ENCODE measurements at regions of chr13 and their contacts with region 1.

Region 1: GRCh38 chr13:42110410-42111155 is 62.1 kb downstream of the DGKH start:
- DNase-seq: no peak
- ATAC-seq: peak; percentile 67
- H3K4me3 Mint-ChIP-seq: no peak overlapping the region
- H3K27ac Mint-ChIP-seq: no peak overlapping the region
- H3K4me1 Mint-ChIP-seq: no peaks in the 10 kb centered on the region
- H3K27me3 Mint-ChIP-seq: peaks cover 5% of the 10 kb centered on the region
- CTCF ChIP-seq: peak; percentile 21

Region 2: DNA sequence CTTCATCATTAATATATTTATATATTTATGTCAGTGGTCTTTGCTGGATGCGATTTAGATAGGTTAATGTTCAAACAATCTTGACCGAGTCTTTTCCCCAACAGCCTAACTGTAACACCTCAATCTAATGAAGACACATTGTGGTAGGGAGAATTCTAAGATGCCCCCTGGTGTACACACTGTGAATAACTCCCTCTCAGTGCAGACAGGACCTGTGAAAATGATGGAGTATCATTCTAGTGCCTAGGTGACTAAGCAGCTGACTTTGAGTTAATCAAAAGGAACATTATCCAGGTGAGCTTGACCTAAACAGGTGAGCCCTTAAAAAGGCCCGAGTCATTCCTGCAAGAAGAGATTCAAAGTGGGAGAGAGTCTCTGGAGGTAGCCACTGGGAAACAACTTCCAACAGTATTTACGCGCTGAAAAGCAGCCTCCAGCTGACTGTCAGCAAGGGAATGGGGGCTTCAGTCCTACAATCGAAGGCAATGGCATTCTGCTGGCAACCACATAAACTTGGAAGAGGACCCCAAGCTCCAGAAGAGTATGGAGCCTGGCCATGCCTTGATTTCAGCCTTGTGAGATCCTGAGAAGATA is 888.2 kb before region 1 on chr13:
- CTCF ChIA-PET with region 1: no interaction called
- POLR2A ChIA-PET with region 1: no interaction called
- intact Hi-C with region 1: loop called (anchors 5 kb)
- DNase-seq: no peak
- ATAC-seq: peak; percentile 99
- H3K4me3 Mint-ChIP-seq: no peak overlapping the region
- H3K27ac Mint-ChIP-seq: no peak overlapping the region
- H3K4me1 Mint-ChIP-seq: peaks cover 3% of the 10 kb centered on the region
- H3K27me3 Mint-ChIP-seq: no peaks in the 10 kb centered on the region
- CTCF ChIP-seq: no peak

Region 3: GRCh38 chr13:41384755-41385503 is 725.7 kb before region 1 on chr13:
- CTCF ChIA-PET with region 1: no interaction called
- POLR2A ChIA-PET with region 1: no interaction called
- intact Hi-C with region 1: loop called (anchors 1 kb)
- DNase-seq: no peak
- ATAC-seq: no peak
- H3K4me3 Mint-ChIP-seq: no peak overlapping the region
- H3K27ac Mint-ChIP-seq: no peak overlapping the region
- H3K4me1 Mint-ChIP-seq: no peaks in the 10 kb centered on the region
- H3K27me3 Mint-ChIP-seq: peaks cover 8% of the 10 kb centered on the region
- CTCF ChIP-seq: no peak

Region 4: DNA sequence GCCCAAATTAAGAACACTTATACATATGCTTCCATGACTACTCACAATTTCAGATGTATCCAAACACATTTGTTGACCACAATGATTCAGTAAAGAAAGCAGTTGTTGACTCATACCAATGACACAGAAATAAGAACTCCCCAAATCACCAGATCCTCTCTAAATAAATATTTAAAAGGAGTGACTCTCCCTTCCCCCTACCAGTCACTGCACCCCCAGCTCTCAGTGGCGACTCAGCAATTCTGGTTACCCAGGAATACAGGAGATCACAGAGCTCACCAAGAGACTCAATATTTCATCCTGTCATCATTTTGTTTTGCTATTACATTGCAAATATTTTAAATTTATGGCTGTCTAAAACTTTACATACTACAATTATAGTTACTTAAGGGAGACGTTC is 521.7 kb before region 1 on chr13:
- CTCF ChIA-PET with region 1: no interaction called
- POLR2A ChIA-PET with region 1: no interaction called
- intact Hi-C with region 1: loop called (anchors 10 kb)
- DNase-seq: no peak
- ATAC-seq: no peak
- H3K4me3 Mint-ChIP-seq: no peak overlapping the region
- H3K27ac Mint-ChIP-seq: no peak overlapping the region
- H3K4me1 Mint-ChIP-seq: peaks cover 12% of the 10 kb centered on the region
- H3K27me3 Mint-ChIP-seq: no peaks in the 10 kb centered on the region
- CTCF ChIP-seq: no peak

Region 5: GRCh38 chr13:41905600-41906254 is 204.9 kb before region 1 on chr13:
- CTCF ChIA-PET with region 1: interaction called, 3 read pairs
- POLR2A ChIA-PET with region 1: no interaction called
- intact Hi-C with region 1: loop called (anchors 1 kb)
- DNase-seq: no peak
- ATAC-seq: peak; percentile 78
- H3K4me3 Mint-ChIP-seq: no peak overlapping the region
- H3K27ac Mint-ChIP-seq: no peak overlapping the region
- H3K4me1 Mint-ChIP-seq: no peaks in the 10 kb centered on the region
- H3K27me3 Mint-ChIP-seq: no peaks in the 10 kb centered on the region
- CTCF ChIP-seq: peak; percentile 30

Region 6: DNA sequence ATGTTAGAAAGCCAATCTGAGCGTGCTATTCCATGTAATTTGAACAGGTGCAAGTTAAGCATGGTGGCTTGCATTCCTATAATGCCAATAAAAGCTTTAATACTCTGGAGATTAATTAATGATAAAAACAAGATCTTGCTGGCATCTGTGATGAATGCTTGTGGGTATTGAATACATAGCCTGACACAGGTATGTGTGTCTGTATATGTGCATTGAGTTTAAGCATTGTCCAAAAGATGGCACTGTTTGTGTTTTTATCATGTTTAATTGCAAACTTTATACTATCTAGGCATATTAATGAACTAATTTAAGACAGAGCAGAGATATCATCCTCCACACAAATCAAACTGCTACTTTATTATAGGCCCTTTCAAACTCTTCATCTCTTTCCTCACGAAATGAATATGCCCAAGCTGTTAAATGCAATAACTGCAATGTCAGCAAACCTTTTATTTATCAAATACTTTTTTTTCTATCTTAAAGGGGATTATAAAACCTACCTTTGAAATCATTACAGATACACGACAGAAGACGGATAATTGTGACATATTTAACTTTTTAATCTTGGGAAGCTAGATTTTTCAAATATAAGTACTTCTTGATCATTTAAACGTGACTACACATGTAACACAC is 549.9 kb after region 1 on chr13:
- CTCF ChIA-PET with region 1: no interaction called
- POLR2A ChIA-PET with region 1: no interaction called
- intact Hi-C with region 1: no loop called
- DNase-seq: no peak
- ATAC-seq: no peak
- H3K4me3 Mint-ChIP-seq: no peak overlapping the region
- H3K27ac Mint-ChIP-seq: no peak overlapping the region
- H3K4me1 Mint-ChIP-seq: no peaks in the 10 kb centered on the region
- H3K27me3 Mint-ChIP-seq: peaks cover 24% of the 10 kb centered on the region
- CTCF ChIP-seq: no peak

Measured in activated B cell treated with CpG ODN at 0.5 μM for 24 hours (primary cell).